ENCODE measurements at regions of chr5 and their contacts with region 1.

Region 1: GRCh38 chr5:65198456-65199120 is 283.1 kb downstream of the ADAMTS6 start:
- DNase-seq: peak; percentile 35
- ATAC-seq: no peak; the same call in 2 of the 3 replicates
- H3K4me3 ChIP-seq: no peak overlapping the region
- H3K27ac ChIP-seq: no peak overlapping the region
- H3K4me1 ChIP-seq: no peaks in the 10 kb centered on the region
- H3K27me3 ChIP-seq: no peaks in the 10 kb centered on the region
- CTCF ChIP-seq: no peak
- EP300 ChIP-seq: no peak
- POLR2A ChIP-seq: no peak
- RAD21 ChIP-seq: no peak

Region 2: GRCh38 chr5:65102828-65103711 is 95.5 kb before region 1 on chr5:
- CTCF ChIA-PET with region 1: no interaction called
- POLR2A ChIA-PET with region 1: no interaction called
- in situ Hi-C with region 1: no loop called
- intact Hi-C with region 1: no loop called
- DNase-seq: peak; percentile 35
- ATAC-seq: peak; percentile 79
- H3K4me3 ChIP-seq: peak overlapping the region; percentile 75 to 77 (median 76)
- H3K27ac ChIP-seq: peak overlapping the region; percentile 46
- H3K4me1 ChIP-seq: peaks cover 21% of the 10 kb centered on the region
- H3K27me3 ChIP-seq: peaks cover 1 to 28% of the 10 kb centered on the region in 2 experiments; a peak in 3 of 5 replicates
- CTCF ChIP-seq: peak; percentile 51
- EP300 ChIP-seq: no peak
- POLR2A ChIP-seq: no peak
- RAD21 ChIP-seq: no peak; the same call in 1 of the 2 replicates

Region 3: DNA sequence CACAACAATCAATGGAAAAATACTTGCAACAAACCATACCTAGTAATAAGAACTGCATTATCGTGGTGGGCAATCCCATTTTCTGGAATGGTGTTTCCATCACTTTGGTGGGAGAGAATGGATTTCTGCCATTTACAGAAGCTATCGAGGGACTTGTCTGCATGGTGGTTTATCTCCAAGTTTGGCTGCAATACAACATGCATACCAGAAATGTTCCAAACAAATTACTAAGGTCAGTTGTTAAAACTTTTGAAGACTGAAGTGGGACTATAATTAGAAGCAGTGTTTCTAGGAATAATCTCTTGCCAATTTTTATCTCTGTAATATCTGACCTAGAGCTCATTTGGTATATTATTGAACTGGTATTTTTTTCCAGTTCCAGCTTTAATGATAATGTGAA is 252.8 kb after region 1 on chr5:
- CTCF ChIA-PET with region 1: no interaction called
- POLR2A ChIA-PET with region 1: no interaction called
- in situ Hi-C with region 1: no loop called
- intact Hi-C with region 1: loop called (anchors 5 kb)
- DNase-seq: no peak
- ATAC-seq: no peak
- H3K4me3 ChIP-seq: no peak overlapping the region
- H3K27ac ChIP-seq: no peak overlapping the region
- H3K4me1 ChIP-seq: no peaks in the 10 kb centered on the region
- H3K27me3 ChIP-seq: no peaks in the 10 kb centered on the region
- CTCF ChIP-seq: no peak
- EP300 ChIP-seq: no peak
- POLR2A ChIP-seq: no peak
- RAD21 ChIP-seq: no peak

Measured in HepG2 (cell line).